Posterior cingulate gyrus (tissue), 11 donors: ENCODE measurements at regions of chr3 and their contacts with region 1.

Region 1: DNA sequence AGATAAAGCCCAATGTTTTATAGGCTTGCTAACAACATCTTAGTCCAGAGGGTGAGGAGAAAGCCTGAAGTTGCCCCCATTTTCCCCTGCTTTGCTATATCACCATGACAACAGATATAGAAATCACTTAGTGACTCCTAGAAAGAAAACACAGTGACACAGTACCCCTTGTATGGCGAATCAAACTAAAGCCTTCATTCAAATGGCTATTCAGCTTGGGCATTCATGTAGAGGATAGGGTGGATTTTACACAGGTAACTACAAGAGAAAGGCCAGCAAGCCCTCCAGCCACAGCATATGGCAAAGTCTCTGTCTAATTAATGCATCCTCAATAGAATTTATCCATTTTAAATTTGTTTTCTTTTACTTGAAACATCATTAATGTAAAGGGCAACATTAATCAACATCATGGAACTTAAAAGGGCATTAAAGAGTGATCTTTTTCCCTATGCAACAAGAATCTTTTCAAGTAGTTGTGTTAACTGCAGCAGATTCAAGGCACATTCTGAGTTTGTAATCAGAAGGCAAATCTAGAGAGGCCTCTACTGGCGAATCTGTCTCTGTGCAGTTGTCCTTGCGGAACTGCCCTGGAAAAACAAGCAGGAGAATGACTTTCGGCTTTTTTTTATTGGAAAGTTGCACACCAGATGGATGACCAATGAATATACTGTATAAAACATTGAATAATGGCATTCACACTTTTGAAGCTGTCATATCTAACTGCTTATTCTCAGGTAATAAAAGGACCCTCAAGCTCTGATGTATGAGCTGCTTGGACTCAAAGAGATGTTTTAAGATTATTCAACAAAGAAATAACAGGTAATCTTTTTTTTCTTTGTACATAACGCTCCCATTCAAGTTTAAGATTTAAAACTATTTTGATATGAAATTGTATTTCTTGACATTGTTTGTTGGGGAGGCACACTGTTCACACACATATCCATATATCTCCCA is 621.7 kb upstream of the AGTR1 start:
- DNase-seq: peak in 4 of 10 donors; percentile 27 to 74 (median 30)

Region 2: DNA sequence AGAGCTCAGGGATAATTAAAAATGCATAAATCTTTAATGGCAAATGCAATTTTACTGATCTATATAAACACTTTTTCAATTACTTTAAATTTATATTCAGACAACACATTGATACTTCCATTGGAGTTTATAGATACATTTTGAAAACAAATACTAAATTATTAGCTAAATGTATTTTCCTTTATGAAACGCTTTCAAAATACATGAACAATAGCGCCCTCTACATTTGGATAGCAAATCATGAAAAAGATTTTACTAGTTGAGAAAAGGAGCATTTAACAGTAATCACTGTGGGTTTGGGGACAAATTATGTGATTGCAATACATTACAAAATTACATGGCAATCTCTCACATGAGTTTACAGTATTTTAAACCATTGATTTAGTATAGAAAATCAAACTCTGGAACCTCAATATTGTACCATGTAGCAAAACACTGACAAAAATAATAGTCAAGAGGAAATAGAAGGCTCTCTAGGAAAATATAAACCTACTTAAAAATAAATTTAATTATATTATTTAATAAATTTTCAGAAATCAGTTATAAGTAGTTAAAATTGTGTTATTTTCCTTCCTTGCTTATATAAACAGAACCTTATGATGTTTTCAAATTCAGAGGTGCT is 458.9 kb before region 1 on chr3:
- intact Hi-C with region 1: loop called (anchors 5 kb)
- DNase-seq: no peak

Region 3: GRCh38 chr3:147864754-147865354 is 211.2 kb before region 1 on chr3:
- intact Hi-C with region 1: no loop called
- DNase-seq: no peak

Region 4: DNA sequence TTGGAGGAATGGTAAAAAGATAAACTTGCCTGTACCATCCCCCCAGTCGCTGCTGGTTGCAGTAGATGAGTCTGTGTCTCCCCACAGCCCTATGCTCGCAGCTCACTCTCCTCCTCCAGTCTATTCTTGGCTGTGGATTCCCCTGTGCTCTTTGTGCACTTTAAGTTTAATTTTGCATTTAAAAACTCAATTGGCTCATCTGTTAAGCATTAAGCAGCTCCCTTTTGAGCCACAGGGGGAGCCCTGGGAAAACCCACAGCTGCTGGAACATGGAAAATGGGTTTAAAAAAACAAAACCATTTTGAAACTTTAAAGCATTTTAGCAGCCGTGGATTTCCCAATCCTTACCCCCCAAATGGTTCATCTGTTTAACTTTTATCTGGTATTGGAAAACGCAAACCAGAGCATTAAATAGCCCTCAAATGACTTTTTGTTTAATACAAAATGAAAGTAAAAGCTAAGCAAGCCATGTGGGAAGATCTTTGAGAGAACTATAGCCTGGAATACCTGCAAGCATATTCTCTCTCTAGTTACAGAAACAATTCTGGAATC is 130.0 kb before region 1 on chr3:
- intact Hi-C with region 1: loop called (anchors 5 kb)
- DNase-seq: peak in 3 of 10 donors; percentile 11 to 82 (median 35)

Region 5: DNA sequence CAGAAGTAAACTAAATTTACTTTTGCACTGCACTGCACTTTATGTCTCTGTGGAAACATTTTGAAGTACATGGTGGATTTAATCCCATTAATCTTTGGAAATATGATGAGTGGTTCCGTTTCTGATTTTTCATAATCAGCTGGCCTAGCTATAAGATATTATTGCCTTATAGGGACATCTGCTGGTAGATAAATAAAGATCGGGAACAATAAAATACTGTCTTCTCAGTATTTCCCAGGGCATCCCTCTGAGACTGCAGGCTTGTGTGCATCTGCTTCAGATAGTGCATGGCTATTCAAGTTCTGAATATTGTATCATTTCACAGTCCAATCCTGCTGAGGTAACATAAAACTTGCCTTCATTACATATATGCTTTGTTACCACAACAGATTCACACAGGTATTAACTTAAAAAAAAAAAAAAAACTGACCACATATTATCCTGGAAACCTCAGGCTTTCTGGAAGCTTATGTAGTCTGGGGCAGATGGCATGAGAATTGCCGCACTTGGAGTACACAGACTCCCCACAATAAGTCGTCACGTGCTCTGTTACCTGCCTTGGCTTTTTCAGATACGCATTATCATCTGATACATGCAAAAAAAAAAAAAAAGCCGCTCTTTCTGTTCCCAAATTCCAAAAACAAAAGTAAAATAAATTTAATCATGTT is 290.8 kb after region 1 on chr3:
- intact Hi-C with region 1: loop called (anchors 10 kb)
- DNase-seq: peak in 1 of 10 donors; percentile 13